ENCODE measurements at regions of chr6 and their contacts with region 1.

Region 1: GRCh38 chr6:137094411-137095008 is 49.7 kb upstream of the IL20RA start:
- DNase-seq: peak in 1 of 3 donors; percentile 52
- ATAC-seq: peak; percentile 81 to 95 (median 82)
- H3K4me3 ChIP-seq: no peak overlapping the region
- H3K27ac ChIP-seq: no peak overlapping the region
- H3K4me1 ChIP-seq: no peaks in the 10 kb centered on the region
- H3K27me3 ChIP-seq: no peaks in the 10 kb centered on the region
- CTCF ChIP-seq: peak; percentile 73 to 87 (median 78)
- POLR2A ChIP-seq: no peak

Region 2: GRCh38 chr6:136792410-136793262 is 301.9 kb before region 1 on chr6 and contains the start of gene MAP3K5:
- intact Hi-C with region 1: no loop called
- DNase-seq: peak; percentile 94 to 95 (median 94)
- ATAC-seq: peak; percentile 85 to 91 (median 86)
- H3K4me3 ChIP-seq: peak within 1 kb of the TSS; percentile 90 to 96 (median 95)
- H3K27ac ChIP-seq: peak within 1 kb of the TSS; percentile 93 to 95 (median 93)
- H3K4me1 ChIP-seq: peaks cover 0 to 26% (median 9%) of the 10 kb centered on the region in 4 donors
- H3K27me3 ChIP-seq: no peaks in the 10 kb centered on the region
- CTCF ChIP-seq: peak; percentile 73 to 85 (median 80)
- POLR2A ChIP-seq: peak; percentile 16
- total RNA-seq, gene MAP3K5: 5.0 to 10.4 (median 6.9) TPM

Region 3: GRCh38 chr6:136811272-136811671 is 283.2 kb before region 1 on chr6:
- intact Hi-C with region 1: no loop called
- DNase-seq: no peak
- ATAC-seq: no peak
- H3K4me3 ChIP-seq: no peak overlapping the region
- H3K27ac ChIP-seq: no peak overlapping the region
- H3K4me1 ChIP-seq: no peaks in the 10 kb centered on the region
- H3K27me3 ChIP-seq: no peaks in the 10 kb centered on the region
- CTCF ChIP-seq: no peak
- POLR2A ChIP-seq: no peak

Region 4: GRCh38 chr6:136901212-136901784 is 193.2 kb before region 1 on chr6:
- intact Hi-C with region 1: no loop called
- DNase-seq: no peak
- ATAC-seq: no peak
- H3K4me3 ChIP-seq: no peak overlapping the region
- H3K27ac ChIP-seq: no peak overlapping the region
- H3K4me1 ChIP-seq: no peaks in the 10 kb centered on the region
- H3K27me3 ChIP-seq: no peaks in the 10 kb centered on the region
- CTCF ChIP-seq: no peak
- POLR2A ChIP-seq: no peak

Region 5: DNA sequence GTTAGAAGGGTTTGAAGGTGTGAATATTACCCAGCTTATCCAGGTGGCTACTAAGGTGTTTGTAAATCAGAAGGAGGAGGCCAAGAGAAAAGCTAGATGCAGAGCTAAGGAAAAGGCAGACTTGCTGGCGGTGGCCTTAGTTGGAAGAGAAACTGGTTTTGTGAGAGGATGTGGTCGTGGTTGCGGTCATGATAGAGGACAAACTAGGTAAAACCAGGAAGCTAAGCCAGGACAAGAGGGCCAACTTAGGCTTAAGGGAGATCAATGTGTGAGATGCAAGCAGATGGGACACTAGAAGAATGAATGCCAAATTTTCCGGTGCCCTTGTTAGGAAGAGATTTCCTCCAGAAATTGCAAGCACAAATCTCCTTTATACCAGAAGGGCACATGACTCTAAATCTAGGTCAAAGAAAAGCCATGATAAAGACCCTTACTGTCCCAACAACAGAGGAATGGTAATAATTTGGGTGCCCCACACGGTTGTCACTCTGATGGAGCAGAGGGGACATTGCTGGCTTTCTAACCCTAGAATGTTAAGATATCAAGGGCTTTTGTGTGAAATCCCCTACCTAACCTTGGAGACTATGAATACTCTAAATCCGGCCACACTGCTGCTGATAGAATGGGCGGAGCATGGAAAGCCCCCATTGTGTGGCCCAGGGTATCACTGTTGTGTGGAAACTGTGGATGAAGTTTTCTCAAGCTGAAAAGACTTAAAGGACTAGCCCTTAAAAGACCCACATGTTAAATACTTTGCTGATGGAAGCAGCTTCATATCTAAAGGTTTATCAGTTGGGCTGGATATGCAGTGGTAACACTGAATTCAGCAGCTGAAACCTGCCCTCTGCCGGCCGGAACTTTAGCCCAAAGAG is 71.1 kb after region 1 on chr6:
- intact Hi-C with region 1: loop called (anchors 10 kb)
- DNase-seq: peak in 2 of 3 donors; percentile 51 to 72
- ATAC-seq: peak; percentile 68 to 87 (median 80)
- H3K4me3 ChIP-seq: no peak overlapping the region
- H3K27ac ChIP-seq: no peak overlapping the region
- H3K4me1 ChIP-seq: no peaks in the 10 kb centered on the region
- H3K27me3 ChIP-seq: no peaks in the 10 kb centered on the region
- CTCF ChIP-seq: peak; percentile 46 to 68 (median 58)
- POLR2A ChIP-seq: no peak

Measured in right lobe of liver (tissue), 6 donors.